Activated CD8-positive, alpha-beta memory T cell treated with anti-CD3 and anti-CD28 coated beads, Interleukin-2, amount 10 ng/mL, durations not matched to agents 7 days and 5 days (primary cell): ENCODE measurements at regions of chr11 and their contacts with region 1.

Region 1: GRCh38 chr11:63838678-63839507 is at the start of gene MARK2:
- DNase-seq: peak; percentile 99
- ATAC-seq: peak; percentile 89
- H3K4me3 Mint-ChIP-seq: peak within 1 kb of the TSS; percentile 85
- H3K27ac Mint-ChIP-seq: peak within 1 kb of the TSS; percentile 88
- H3K4me1 Mint-ChIP-seq: peaks cover 55% of the 10 kb centered on the region
- H3K27me3 Mint-ChIP-seq: no peaks in the 10 kb centered on the region
- total RNA-seq, gene MARK2: 57.2 to 57.9 TPM

Region 2: GRCh38 chr11:63855975-63856749 is 17.3 kb after region 1 on chr11:
- CTCF ChIA-PET with region 1: interaction called, 13 read pairs
- DNase-seq: no peak
- ATAC-seq: peak; percentile 14
- H3K4me3 Mint-ChIP-seq: no peak overlapping the region
- H3K27ac Mint-ChIP-seq: peak overlapping the region; percentile 68
- H3K4me1 Mint-ChIP-seq: peaks cover 64% of the 10 kb centered on the region
- H3K27me3 Mint-ChIP-seq: no peaks in the 10 kb centered on the region

Region 3: GRCh38 chr11:63888170-63889086 is 49.5 kb after region 1 on chr11:
- CTCF ChIA-PET with region 1: interaction called, 44 read pairs
- DNase-seq: peak; percentile 82
- ATAC-seq: peak; percentile 81
- H3K4me3 Mint-ChIP-seq: peak overlapping the region; percentile 98
- H3K27ac Mint-ChIP-seq: peak overlapping the region; percentile 91
- H3K4me1 Mint-ChIP-seq: peaks cover 70% of the 10 kb centered on the region
- H3K27me3 Mint-ChIP-seq: no peaks in the 10 kb centered on the region

Region 4: DNA sequence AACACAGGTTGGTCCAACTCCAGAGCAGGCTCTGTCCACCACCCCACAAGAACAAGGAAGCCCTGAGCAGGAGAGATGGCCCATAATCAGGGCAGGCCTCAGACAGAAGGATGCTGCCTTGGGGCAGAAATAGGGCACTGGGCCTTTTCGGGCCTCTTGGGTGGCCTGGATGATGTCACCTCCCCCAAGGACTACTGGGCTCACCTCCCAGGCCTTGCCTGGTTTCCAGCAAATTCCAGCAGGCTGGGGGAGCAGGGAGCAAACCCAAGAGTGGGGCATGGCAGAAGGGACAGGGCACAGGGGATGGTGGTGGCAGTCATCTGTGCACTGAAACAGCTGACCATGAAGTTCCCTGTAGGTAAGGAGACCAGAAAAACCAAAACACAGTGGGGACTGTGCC is 94.6 kb after region 1 on chr11:
- CTCF ChIA-PET with region 1: interaction called, 16 read pairs
- DNase-seq: no peak
- ATAC-seq: no peak
- H3K4me3 Mint-ChIP-seq: no peak overlapping the region
- H3K27ac Mint-ChIP-seq: no peak overlapping the region
- H3K4me1 Mint-ChIP-seq: peaks cover 9% of the 10 kb centered on the region
- H3K27me3 Mint-ChIP-seq: peaks cover 3% of the 10 kb centered on the region

Region 5: DNA sequence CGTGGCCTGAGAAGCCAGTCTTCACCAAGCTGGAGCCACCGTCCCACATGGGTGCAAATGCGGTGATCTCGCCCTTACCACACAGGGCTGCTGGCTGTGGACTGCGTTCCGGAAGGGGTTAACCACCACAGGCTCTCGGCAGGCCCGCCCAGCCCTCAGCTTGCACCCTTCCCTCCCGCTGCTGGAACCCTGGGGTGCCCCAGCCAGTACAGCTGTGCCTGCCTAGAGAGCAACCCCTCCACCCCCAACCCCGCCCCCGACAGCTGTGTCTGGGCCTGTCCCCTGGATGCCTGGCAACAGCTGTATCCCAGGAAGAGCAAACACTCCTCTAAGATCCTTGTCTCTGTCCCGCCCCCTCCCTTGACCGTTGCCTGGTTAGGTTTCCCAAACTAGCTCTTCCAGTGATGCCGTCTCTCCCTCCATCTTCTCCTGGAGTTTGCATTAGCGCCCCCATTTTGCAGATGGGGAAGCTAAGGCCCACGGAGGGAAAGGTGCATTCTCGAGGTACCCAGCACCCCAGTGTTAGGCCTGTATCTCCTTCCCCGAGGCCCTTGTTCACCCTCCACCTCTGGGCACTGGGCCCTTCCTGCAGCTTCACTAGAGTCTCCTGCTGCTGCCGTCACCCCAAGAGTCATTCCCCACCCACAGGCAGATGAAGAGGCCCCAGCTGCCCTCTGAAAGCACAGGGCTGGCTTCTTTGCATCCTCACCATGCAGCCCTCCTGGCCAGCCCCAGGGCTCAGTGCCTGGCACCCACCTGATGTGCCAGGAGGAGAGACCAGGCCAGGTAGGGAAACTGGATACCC is 122.9 kb after region 1 on chr11:
- CTCF ChIA-PET with region 1: interaction called, 14 read pairs
- DNase-seq: peak; percentile 83
- ATAC-seq: peak; percentile 77
- H3K4me3 Mint-ChIP-seq: peak overlapping the region; percentile 3
- H3K27ac Mint-ChIP-seq: peak overlapping the region; percentile 38
- H3K4me1 Mint-ChIP-seq: peaks cover 32% of the 10 kb centered on the region
- H3K27me3 Mint-ChIP-seq: no peaks in the 10 kb centered on the region